ENCODE measurements at regions of chr9 and their contacts with region 1.

Region 1: DNA sequence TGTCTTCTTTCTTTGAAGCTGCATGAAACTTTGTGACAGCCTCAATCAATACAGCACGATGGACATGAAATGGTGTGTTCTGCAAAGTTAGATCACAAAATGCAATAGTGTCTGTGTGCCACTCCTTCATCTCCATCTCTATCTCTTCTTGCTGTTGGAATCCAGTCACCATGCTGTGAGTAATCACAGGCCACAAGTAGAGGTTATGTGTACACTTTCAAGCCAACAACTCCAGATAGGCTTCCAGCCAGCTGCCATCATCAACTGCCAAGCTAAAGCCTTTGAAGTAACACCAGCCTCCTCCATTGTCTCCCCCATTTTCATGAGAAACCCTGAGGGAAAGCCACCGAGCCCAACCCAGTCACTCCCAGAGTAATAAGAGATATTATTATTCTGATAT is 360.6 kb downstream of the PTPRD start:
- DNase-seq: no peak
- ATAC-seq: no peak
- H3K4me3 ChIP-seq: no peak overlapping the region
- H3K4me3 Mint-ChIP-seq: no peak overlapping the region
- H3K27ac ChIP-seq: no peak overlapping the region
- H3K27ac Mint-ChIP-seq: no peak overlapping the region
- H3K4me1 ChIP-seq: no peaks in the 10 kb centered on the region
- H3K4me1 Mint-ChIP-seq: no peaks in the 10 kb centered on the region
- H3K27me3 ChIP-seq: no peaks in the 10 kb centered on the region
- H3K27me3 Mint-ChIP-seq: no peaks in the 10 kb centered on the region
- CTCF ChIP-seq: no peak

Region 2: GRCh38 chr9:10235376-10235775 is 16.8 kb before region 1 on chr9:
- CTCF ChIA-PET with region 1: no interaction called
- POLR2A ChIA-PET with region 1: no interaction called
- intact Hi-C with region 1: loop called in 1 of 2 experiments (anchors 1 kb)
- DNase-seq: no peak
- ATAC-seq: no peak
- H3K4me3 ChIP-seq: no peak overlapping the region
- H3K4me3 Mint-ChIP-seq: no peak overlapping the region
- H3K27ac ChIP-seq: no peak overlapping the region
- H3K27ac Mint-ChIP-seq: no peak overlapping the region
- H3K4me1 ChIP-seq: no peaks in the 10 kb centered on the region
- H3K4me1 Mint-ChIP-seq: no peaks in the 10 kb centered on the region
- H3K27me3 ChIP-seq: no peaks in the 10 kb centered on the region
- H3K27me3 Mint-ChIP-seq: no peaks in the 10 kb centered on the region
- CTCF ChIP-seq: no peak

Region 3: GRCh38 chr9:10387282-10387681 is 135.1 kb after region 1 on chr9:
- CTCF ChIA-PET with region 1: no interaction called
- POLR2A ChIA-PET with region 1: no interaction called
- intact Hi-C with region 1: no loop called
- DNase-seq: no peak
- ATAC-seq: no peak
- H3K4me3 ChIP-seq: no peak overlapping the region
- H3K4me3 Mint-ChIP-seq: no peak overlapping the region
- H3K27ac ChIP-seq: no peak overlapping the region
- H3K27ac Mint-ChIP-seq: no peak overlapping the region
- H3K4me1 ChIP-seq: no peaks in the 10 kb centered on the region
- H3K4me1 Mint-ChIP-seq: no peaks in the 10 kb centered on the region
- H3K27me3 ChIP-seq: no peaks in the 10 kb centered on the region
- H3K27me3 Mint-ChIP-seq: no peaks in the 10 kb centered on the region
- CTCF ChIP-seq: no peak